SK-N-SH (cell line): ENCODE measurements at regions of chr3 and their contacts with region 1.

Region 1: GRCh38 chr3:127455541-127456450 is 134.7 kb downstream of the TPRA1 start:
- DNase-seq: peak; percentile 98
- H3K4me3 ChIP-seq: peak overlapping the region; percentile 40 to 58; a peak in 3 of 4 replicates
- H3K27ac ChIP-seq: no peak overlapping the region; a peak in 1 of 4 replicates
- H3K4me1 ChIP-seq: peaks cover 7 to 13% of the 10 kb centered on the region in 2 experiments; a peak in 2 of 4 replicates
- H3K27me3 ChIP-seq: no peaks in the 10 kb centered on the region
- CTCF ChIP-seq: peak; percentile 81
- EP300 ChIP-seq: peak in 1 of 2 experiments; percentile 19; a peak in 1 of 4 replicates
- RAD21 ChIP-seq: peak; percentile 91

Region 2: DNA sequence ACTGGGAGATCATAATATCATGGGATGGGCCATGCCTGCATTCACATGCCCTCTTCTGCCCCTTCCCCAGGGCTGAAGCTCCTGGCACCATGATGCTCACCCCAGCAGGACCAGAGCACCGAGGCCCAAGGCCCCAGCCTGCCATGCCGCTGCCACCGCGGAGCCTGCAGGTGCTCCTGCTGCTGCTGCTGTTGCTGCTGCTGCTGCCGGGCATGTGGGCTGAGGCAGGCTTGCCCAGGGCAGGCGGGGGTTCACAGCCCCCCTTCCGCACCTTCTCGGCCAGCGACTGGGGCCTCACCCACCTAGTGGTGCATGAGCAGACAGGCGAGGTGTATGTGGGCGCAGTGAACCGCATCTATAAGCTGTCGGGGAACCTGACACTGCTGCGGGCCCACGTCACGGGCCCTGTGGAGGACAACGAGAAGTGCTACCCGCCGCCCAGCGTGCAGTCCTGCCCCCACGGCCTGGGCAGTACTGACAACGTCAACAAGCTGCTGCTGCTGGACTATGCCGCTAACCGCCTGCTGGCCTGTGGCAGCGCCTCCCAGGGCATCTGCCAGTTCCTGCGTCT is 467.3 kb before region 1 on chr3:
- CTCF ChIA-PET with region 1: interaction called, 88 read pairs
- POLR2A ChIA-PET with region 1: no interaction called
- DNase-seq: no peak
- H3K4me3 ChIP-seq: no peak overlapping the region
- H3K27ac ChIP-seq: no peak overlapping the region; a peak in 1 of 4 replicates
- H3K4me1 ChIP-seq: peaks cover 10 to 33% of the 10 kb centered on the region in 2 experiments; a peak in 2 of 4 replicates
- H3K27me3 ChIP-seq: no peaks in the 10 kb centered on the region
- CTCF ChIP-seq: no peak
- EP300 ChIP-seq: no peak
- RAD21 ChIP-seq: no peak

Region 3: GRCh38 chr3:127342735-127343134 is 113.1 kb before region 1 on chr3:
- CTCF ChIA-PET with region 1: no interaction called
- POLR2A ChIA-PET with region 1: no interaction called
- DNase-seq: no peak
- H3K4me3 ChIP-seq: no peak overlapping the region
- H3K27ac ChIP-seq: no peak overlapping the region
- H3K4me1 ChIP-seq: no peaks in the 10 kb centered on the region
- H3K27me3 ChIP-seq: no peaks in the 10 kb centered on the region
- CTCF ChIP-seq: no peak
- EP300 ChIP-seq: no peak
- RAD21 ChIP-seq: no peak

Region 4: GRCh38 chr3:127473244-127474024 is 17.6 kb after region 1 on chr3:
- CTCF ChIA-PET with region 1: interaction called, 38 read pairs
- POLR2A ChIA-PET with region 1: no interaction called
- DNase-seq: peak; percentile 79
- H3K4me3 ChIP-seq: no peak overlapping the region
- H3K27ac ChIP-seq: no peak overlapping the region
- H3K4me1 ChIP-seq: peaks cover 0 to 4% of the 10 kb centered on the region in 2 experiments; a peak in 1 of 4 replicates
- H3K27me3 ChIP-seq: peaks cover 2% of the 10 kb centered on the region; the same call in 1 of the 2 replicates
- CTCF ChIP-seq: peak; percentile 37; the same call in 1 of the 2 replicates
- EP300 ChIP-seq: no peak
- RAD21 ChIP-seq: peak; percentile 54

Region 5: GRCh38 chr3:127679285-127680145 is 223.7 kb after region 1 on chr3:
- CTCF ChIA-PET with region 1: no interaction called
- POLR2A ChIA-PET with region 1: no interaction called
- DNase-seq: no peak
- H3K4me3 ChIP-seq: no peak overlapping the region
- H3K27ac ChIP-seq: no peak overlapping the region
- H3K4me1 ChIP-seq: peaks cover 0 to 2% of the 10 kb centered on the region in 2 experiments; a peak in 1 of 4 replicates
- H3K27me3 ChIP-seq: no peaks in the 10 kb centered on the region
- CTCF ChIP-seq: no peak
- EP300 ChIP-seq: no peak
- RAD21 ChIP-seq: no peak